Caco-2 (cell line): ENCODE measurements at regions of chr2 and their contacts with region 1.

Region 1: DNA sequence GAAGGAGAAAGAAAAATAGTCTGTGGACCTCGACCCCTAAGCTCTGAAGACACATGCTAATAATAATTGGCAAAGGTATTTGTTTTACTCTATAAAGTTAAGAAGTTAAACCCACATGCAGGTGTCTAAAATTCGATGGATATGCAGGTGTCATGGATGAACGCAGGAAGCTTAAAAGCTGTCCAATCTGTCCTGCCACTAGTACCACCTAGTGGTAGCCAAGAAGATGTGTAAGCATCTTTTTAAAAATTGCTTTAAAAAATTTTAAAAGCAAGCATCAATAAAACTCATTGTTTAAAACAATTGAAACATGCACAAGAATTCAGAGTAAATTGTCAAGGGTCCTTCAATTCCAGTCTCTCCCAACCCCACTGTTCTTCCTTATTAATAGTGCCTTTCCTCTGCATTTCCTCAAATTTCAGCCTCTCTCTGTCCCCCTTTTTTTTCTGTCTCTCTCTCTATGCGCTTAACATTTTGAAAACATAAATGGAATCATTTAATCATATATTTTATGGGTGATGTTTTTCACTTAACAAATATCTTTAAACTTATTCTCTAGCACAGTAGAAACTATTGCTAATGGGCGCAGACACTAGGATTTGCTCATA is 30.6 kb upstream of the PPP3R1 start:
- DNase-seq: peak in 1 of 2 experiments; percentile 31
- H3K4me3 ChIP-seq: no peak overlapping the region
- H3K4me3 Mint-ChIP-seq: no peak overlapping the region
- H3K27ac Mint-ChIP-seq: no peak overlapping the region
- H3K4me1 ChIP-seq: no peaks in the 10 kb centered on the region
- H3K4me1 Mint-ChIP-seq: no peaks in the 10 kb centered on the region
- H3K27me3 ChIP-seq: no peaks in the 10 kb centered on the region; the same call in 1 of the 2 replicates
- H3K27me3 Mint-ChIP-seq: peaks cover 9% of the 10 kb centered on the region
- CTCF ChIP-seq: peak; percentile 68 to 74

Region 2: GRCh38 chr2:68121873-68122679 is 160.8 kb before region 1 on chr2:
- CTCF ChIA-PET with region 1: interaction called, 11 read pairs
- POLR2A ChIA-PET with region 1: no interaction called
- intact Hi-C with region 1: loop called (anchors 1 kb)
- DNase-seq: peak; percentile 87 to 89
- H3K4me3 ChIP-seq: no peak overlapping the region
- H3K4me3 Mint-ChIP-seq: peak overlapping the region; percentile 34
- H3K27ac Mint-ChIP-seq: no peak overlapping the region
- H3K4me1 ChIP-seq: peaks cover 12% of the 10 kb centered on the region
- H3K4me1 Mint-ChIP-seq: peaks cover 10% of the 10 kb centered on the region
- H3K27me3 ChIP-seq: no peaks in the 10 kb centered on the region
- H3K27me3 Mint-ChIP-seq: no peaks in the 10 kb centered on the region
- CTCF ChIP-seq: peak; percentile 96

Region 3: DNA sequence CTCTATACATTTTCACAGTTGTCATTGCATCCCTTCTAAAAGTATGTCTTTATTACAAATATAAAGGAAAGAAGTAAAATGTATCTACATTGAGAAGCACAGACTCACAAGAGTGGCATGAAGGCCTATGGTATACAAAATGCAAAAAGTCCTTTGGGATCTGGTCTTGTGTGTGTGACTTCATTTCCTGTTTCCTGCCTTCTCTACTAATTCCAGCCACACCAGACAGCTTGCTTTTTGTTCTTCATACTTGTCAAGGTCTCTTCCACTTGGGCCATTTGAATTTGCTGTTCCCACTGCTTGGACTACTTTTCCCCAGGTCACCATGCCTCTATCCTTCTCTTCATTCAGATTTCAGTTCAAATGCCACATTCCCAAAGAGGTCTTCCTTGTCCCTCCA is 131.9 kb before region 1 on chr2:
- CTCF ChIA-PET with region 1: no interaction called
- POLR2A ChIA-PET with region 1: interaction called, 18 read pairs
- intact Hi-C with region 1: no loop called
- DNase-seq: no peak
- H3K4me3 ChIP-seq: no peak overlapping the region
- H3K4me3 Mint-ChIP-seq: no peak overlapping the region
- H3K27ac Mint-ChIP-seq: no peak overlapping the region
- H3K4me1 ChIP-seq: no peaks in the 10 kb centered on the region
- H3K4me1 Mint-ChIP-seq: no peaks in the 10 kb centered on the region
- H3K27me3 ChIP-seq: no peaks in the 10 kb centered on the region
- H3K27me3 Mint-ChIP-seq: no peaks in the 10 kb centered on the region
- CTCF ChIP-seq: no peak

Region 4: DNA sequence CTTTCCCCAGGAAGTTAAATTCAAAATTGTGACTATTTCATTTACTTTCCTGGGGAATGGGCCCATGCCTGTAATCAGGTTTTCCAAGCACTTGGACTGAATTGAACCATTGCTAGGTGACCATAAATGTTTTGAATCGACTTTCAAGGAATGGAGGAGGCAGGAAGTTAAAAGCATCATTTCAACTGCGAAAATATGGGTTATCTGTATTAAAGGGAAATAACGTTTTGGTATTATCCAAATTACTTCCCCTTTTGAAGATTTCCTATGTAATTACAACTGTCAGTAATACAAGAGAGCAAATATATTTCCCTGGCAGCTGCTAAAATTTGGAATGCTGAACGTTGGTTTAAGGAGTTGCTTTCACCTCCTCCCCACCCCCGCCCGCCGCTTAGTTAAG is 106.3 kb before region 1 on chr2:
- CTCF ChIA-PET with region 1: no interaction called
- POLR2A ChIA-PET with region 1: no interaction called
- intact Hi-C with region 1: no loop called
- DNase-seq: no peak
- H3K4me3 ChIP-seq: no peak overlapping the region
- H3K4me3 Mint-ChIP-seq: no peak overlapping the region
- H3K27ac Mint-ChIP-seq: no peak overlapping the region
- H3K4me1 ChIP-seq: no peaks in the 10 kb centered on the region
- H3K4me1 Mint-ChIP-seq: no peaks in the 10 kb centered on the region
- H3K27me3 ChIP-seq: no peaks in the 10 kb centered on the region
- H3K27me3 Mint-ChIP-seq: no peaks in the 10 kb centered on the region
- CTCF ChIP-seq: no peak

Region 5: GRCh38 chr2:68196120-68196716 is 86.7 kb before region 1 on chr2:
- CTCF ChIA-PET with region 1: interaction called, 8 read pairs
- POLR2A ChIA-PET with region 1: no interaction called
- intact Hi-C with region 1: loop called (anchors 1 kb)
- DNase-seq: peak in 1 of 2 experiments; percentile 34
- H3K4me3 ChIP-seq: no peak overlapping the region
- H3K4me3 Mint-ChIP-seq: no peak overlapping the region
- H3K27ac Mint-ChIP-seq: no peak overlapping the region
- H3K4me1 ChIP-seq: no peaks in the 10 kb centered on the region
- H3K4me1 Mint-ChIP-seq: peaks cover 17% of the 10 kb centered on the region
- H3K27me3 ChIP-seq: no peaks in the 10 kb centered on the region
- H3K27me3 Mint-ChIP-seq: no peaks in the 10 kb centered on the region
- CTCF ChIP-seq: peak; percentile 51 to 52

Region 6: GRCh38 chr2:68231061-68231372 is 51.9 kb before region 1 on chr2:
- CTCF ChIA-PET with region 1: no interaction called
- POLR2A ChIA-PET with region 1: no interaction called
- intact Hi-C with region 1: no loop called
- DNase-seq: no peak
- H3K4me3 ChIP-seq: no peak overlapping the region
- H3K4me3 Mint-ChIP-seq: no peak overlapping the region
- H3K27ac Mint-ChIP-seq: peak overlapping the region; percentile 27
- H3K4me1 ChIP-seq: peaks cover 8% of the 10 kb centered on the region; the same call in 1 of the 2 replicates
- H3K4me1 Mint-ChIP-seq: peaks cover 19% of the 10 kb centered on the region
- H3K27me3 ChIP-seq: no peaks in the 10 kb centered on the region
- H3K27me3 Mint-ChIP-seq: no peaks in the 10 kb centered on the region
- CTCF ChIP-seq: no peak

Region 7: GRCh38 chr2:68251187-68251854 is 31.6 kb before region 1 on chr2:
- CTCF ChIA-PET with region 1: interaction called, 3 read pairs
- POLR2A ChIA-PET with region 1: no interaction called
- intact Hi-C with region 1: loop called (anchors 1 kb)
- DNase-seq: peak; percentile 79 to 80
- H3K4me3 ChIP-seq: peak overlapping the region; percentile 99
- H3K4me3 Mint-ChIP-seq: peak overlapping the region; percentile 92
- H3K27ac Mint-ChIP-seq: peak overlapping the region; percentile 97
- H3K4me1 ChIP-seq: 0 out of 2 replicates have a peak, but pooled peaks cover 17% of the 10 kb centered on the region
- H3K4me1 Mint-ChIP-seq: peaks cover 14% of the 10 kb centered on the region
- H3K27me3 ChIP-seq: no peaks in the 10 kb centered on the region
- H3K27me3 Mint-ChIP-seq: no peaks in the 10 kb centered on the region
- CTCF ChIP-seq: peak; percentile 64 to 72